CD4-positive, alpha-beta T cell (primary cell): ENCODE measurements at regions of chr17 and their contacts with region 1.

Region 1: GRCh38 chr17:43211480-43212402 is at the start of gene TMEM106A:
- DNase-seq: peak; percentile 56 to 88 (median 68)
- ATAC-seq: peak; percentile 90
- H3K4me3 ChIP-seq: peak within 1 kb of the TSS; percentile 69
- H3K4me3 Mint-ChIP-seq: peak within 1 kb of the TSS; percentile 98
- H3K27ac ChIP-seq: peak within 1 kb of the TSS; percentile 72 to 77
- H3K27ac Mint-ChIP-seq: peak within 1 kb of the TSS; percentile 89
- H3K4me1 ChIP-seq: peaks cover 22% of the 10 kb centered on the region
- H3K4me1 Mint-ChIP-seq: peaks cover 38% of the 10 kb centered on the region
- H3K27me3 ChIP-seq: no peaks in the 10 kb centered on the region
- H3K27me3 Mint-ChIP-seq: no peaks in the 10 kb centered on the region
- CTCF ChIP-seq: peak; percentile 61
- total RNA-seq, gene TMEM106A: 6.3 to 6.4 TPM

Region 2: GRCh38 chr17:43170766-43171585 is 40.8 kb before region 1 on chr17 and contains the start of gene NBR1:
- CTCF ChIA-PET with region 1: interaction called, 10 read pairs
- POLR2A ChIA-PET with region 1: interaction called, 20 read pairs
- intact Hi-C with region 1: loop called (anchors 1 to 2 kb)
- DNase-seq: peak; percentile 90 to 99 (median 92)
- ATAC-seq: peak; percentile 76
- H3K4me3 ChIP-seq: peak within 1 kb of the TSS; percentile 71
- H3K4me3 Mint-ChIP-seq: no peak within 1 kb of the TSS
- H3K27ac ChIP-seq: peak within 1 kb of the TSS; percentile 98
- H3K27ac Mint-ChIP-seq: no peak within 1 kb of the TSS
- H3K4me1 ChIP-seq: peaks cover 47% of the 10 kb centered on the region
- H3K4me1 Mint-ChIP-seq: peaks cover 27% of the 10 kb centered on the region
- H3K27me3 ChIP-seq: no peaks in the 10 kb centered on the region
- H3K27me3 Mint-ChIP-seq: no peaks in the 10 kb centered on the region
- CTCF ChIP-seq: no peak
- total RNA-seq, gene NBR1: 23.7 TPM

Region 3: GRCh38 chr17:43183921-43184320 is 27.8 kb before region 1 on chr17:
- CTCF ChIA-PET with region 1: no interaction called
- POLR2A ChIA-PET with region 1: no interaction called
- intact Hi-C with region 1: no loop called
- DNase-seq: no peak
- ATAC-seq: no peak
- H3K4me3 ChIP-seq: no peak overlapping the region
- H3K4me3 Mint-ChIP-seq: no peak overlapping the region
- H3K27ac ChIP-seq: no peak overlapping the region
- H3K27ac Mint-ChIP-seq: no peak overlapping the region
- H3K4me1 ChIP-seq: no peaks in the 10 kb centered on the region
- H3K4me1 Mint-ChIP-seq: no peaks in the 10 kb centered on the region
- H3K27me3 ChIP-seq: no peaks in the 10 kb centered on the region
- H3K27me3 Mint-ChIP-seq: no peaks in the 10 kb centered on the region
- CTCF ChIP-seq: no peak

Region 4: DNA sequence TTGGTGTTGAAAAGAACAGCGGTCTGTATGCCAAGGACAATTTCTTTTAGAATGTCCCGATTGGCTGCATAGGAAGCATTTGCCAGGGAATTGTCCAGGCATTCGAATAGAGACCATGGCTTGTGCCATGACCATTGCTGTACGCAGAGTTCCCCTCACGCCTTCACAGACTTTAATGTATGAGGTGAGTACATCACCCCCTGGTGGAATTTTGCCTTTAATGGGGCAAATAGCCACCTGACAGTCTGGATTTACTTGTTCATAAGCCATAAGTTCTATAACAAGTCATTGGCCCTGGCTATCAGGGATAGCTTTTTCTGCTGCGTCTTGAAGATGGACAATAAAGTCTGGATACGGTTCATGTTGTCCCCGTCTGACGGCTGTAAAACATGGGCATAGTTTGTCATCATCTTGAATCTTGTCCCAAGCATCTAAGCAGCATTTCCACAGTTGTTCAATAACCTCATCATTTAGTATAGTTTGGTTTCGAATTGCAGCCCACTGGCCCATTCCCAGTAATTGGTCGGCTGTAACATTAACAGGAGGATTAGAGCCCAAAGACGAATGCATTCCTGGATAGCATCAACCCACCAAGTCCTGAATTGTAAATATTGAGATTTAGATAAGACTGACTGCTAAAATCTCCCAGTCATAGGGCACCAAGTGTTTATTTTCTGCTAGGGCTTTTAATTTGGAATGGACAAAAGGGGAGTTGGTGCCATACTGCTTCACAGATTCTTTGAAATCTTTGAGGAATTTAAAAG is 119.3 kb after region 1 on chr17:
- CTCF ChIA-PET with region 1: no interaction called
- POLR2A ChIA-PET with region 1: interaction called, 4 read pairs
- intact Hi-C with region 1: loop called in 1 of 2 experiments (anchors 5 kb)
- DNase-seq: no peak
- ATAC-seq: no peak
- H3K4me3 ChIP-seq: no peak overlapping the region
- H3K4me3 Mint-ChIP-seq: no peak overlapping the region
- H3K27ac ChIP-seq: no peak overlapping the region
- H3K27ac Mint-ChIP-seq: no peak overlapping the region
- H3K4me1 ChIP-seq: peaks cover 8% of the 10 kb centered on the region
- H3K4me1 Mint-ChIP-seq: peaks cover 7% of the 10 kb centered on the region
- H3K27me3 ChIP-seq: peaks cover 0 to 5% of the 10 kb centered on the region in 2 experiments
- H3K27me3 Mint-ChIP-seq: peaks cover 18% of the 10 kb centered on the region
- CTCF ChIP-seq: no peak